ENCODE measurements at regions of chr20 and their contacts with region 1.

Region 1: GRCh38 chr20:34312544-34313217 is 9.5 kb upstream of the AHCY start:
- H3K4me3 ChIP-seq: peak overlapping the region; percentile 34
- H3K27ac ChIP-seq: no peak overlapping the region
- H3K4me1 ChIP-seq: no peaks in the 10 kb centered on the region
- CTCF ChIP-seq: peak; percentile 100

Region 2: DNA sequence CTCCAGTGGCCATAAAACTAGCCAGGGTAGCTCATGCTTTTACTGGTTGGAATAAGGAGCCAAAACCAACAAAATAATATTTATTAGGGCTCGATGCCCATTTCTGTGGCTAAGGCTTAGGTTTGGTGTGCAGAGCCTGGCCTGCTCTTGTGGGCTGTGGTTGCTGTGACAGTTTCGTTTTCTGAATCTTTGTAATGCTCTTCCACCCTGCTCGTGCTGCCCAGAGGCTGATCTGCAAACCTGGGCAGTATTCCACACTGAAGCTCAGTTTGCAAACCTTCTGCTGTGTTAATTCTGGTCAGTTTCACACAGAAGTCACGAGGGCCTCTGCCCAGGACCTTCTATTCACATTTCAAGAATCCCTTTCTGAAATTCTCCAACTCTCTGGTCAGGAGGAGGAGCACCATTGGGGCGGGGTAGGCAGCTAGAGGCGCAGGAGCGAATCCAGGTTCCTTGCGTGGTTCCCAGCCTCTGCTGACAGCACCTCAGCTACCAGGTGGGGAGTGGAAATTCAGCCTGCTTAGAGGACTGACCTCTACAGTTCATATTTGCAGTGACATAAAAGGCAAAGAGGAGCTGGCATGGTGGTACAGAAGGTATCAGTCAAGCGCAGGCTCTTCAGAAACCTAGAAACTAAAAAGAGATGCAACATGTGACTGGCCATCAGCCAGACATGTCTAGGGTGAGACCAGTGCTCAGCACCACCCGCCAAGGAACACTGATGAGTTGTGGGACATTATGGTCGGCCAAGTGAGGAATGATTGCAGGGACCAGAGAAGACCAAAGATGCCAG is 664.9 kb before region 1 on chr20:
- CTCF ChIA-PET with region 1: no interaction called
- POLR2A ChIA-PET with region 1: no interaction called
- H3K4me3 ChIP-seq: no peak overlapping the region
- H3K27ac ChIP-seq: no peak overlapping the region
- H3K4me1 ChIP-seq: no peaks in the 10 kb centered on the region
- CTCF ChIP-seq: no peak

Region 3: DNA sequence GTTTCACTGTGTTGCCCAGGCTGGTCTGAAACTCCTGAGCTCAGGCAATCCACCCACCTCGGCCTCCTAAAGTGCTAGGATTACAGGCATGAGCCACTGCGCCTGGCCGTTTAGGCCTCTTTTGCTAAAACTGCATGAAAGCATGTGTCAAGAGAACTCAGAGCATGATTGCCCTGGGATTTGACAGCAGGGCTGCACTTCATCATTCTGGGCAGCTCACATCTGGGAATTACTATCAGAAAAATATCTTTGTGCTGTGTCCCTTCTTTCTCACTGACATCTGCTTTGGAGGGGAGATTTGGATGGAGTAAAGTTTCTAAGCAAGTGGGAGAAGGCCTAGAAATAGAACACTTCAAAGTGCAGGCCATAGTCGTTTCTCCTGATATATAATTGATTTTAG is 141.0 kb before region 1 on chr20:
- CTCF ChIA-PET with region 1: no interaction called
- POLR2A ChIA-PET with region 1: no interaction called
- H3K4me3 ChIP-seq: no peak overlapping the region
- H3K27ac ChIP-seq: no peak overlapping the region
- H3K4me1 ChIP-seq: no peaks in the 10 kb centered on the region
- CTCF ChIP-seq: no peak

Region 4: DNA sequence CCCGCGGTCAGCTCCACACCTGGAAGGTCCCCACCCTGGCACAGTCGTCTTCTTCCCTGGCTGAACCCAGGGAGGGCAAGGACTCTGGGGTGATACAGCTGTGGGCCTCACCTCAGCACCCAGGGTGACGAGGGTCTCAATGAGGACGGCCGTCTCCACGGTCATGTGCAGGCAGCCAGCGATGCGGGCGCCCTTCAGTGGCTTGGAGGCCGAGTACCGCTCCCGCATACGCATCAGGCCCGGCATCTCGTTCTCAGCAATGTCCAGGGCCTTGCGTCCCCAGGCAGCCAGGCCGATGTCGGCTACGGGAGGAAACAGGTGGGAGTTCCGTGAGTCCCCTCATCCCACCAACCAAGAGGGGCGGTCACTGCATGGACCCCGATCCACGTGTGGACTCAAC is 17.4 kb before region 1 on chr20:
- CTCF ChIA-PET with region 1: interaction called, 11 read pairs
- POLR2A ChIA-PET with region 1: interaction called, 3 read pairs
- H3K4me3 ChIP-seq: no peak overlapping the region
- H3K27ac ChIP-seq: no peak overlapping the region
- H3K4me1 ChIP-seq: peaks cover under 1% of the 10 kb centered on the region
- CTCF ChIP-seq: no peak

Region 5: GRCh38 chr20:34363062-34363464 is 50.4 kb after region 1 on chr20 and contains the start of gene ITCH:
- CTCF ChIA-PET with region 1: interaction called, 15 read pairs
- POLR2A ChIA-PET with region 1: interaction called, 14 read pairs
- H3K4me3 ChIP-seq: peak within 1 kb of the TSS; percentile 88
- H3K27ac ChIP-seq: peak within 1 kb of the TSS; percentile 73
- H3K4me1 ChIP-seq: 0 out of 2 replicates have a peak, but pooled peaks cover 5% of the 10 kb centered on the region
- CTCF ChIP-seq: no peak

Region 6: DNA sequence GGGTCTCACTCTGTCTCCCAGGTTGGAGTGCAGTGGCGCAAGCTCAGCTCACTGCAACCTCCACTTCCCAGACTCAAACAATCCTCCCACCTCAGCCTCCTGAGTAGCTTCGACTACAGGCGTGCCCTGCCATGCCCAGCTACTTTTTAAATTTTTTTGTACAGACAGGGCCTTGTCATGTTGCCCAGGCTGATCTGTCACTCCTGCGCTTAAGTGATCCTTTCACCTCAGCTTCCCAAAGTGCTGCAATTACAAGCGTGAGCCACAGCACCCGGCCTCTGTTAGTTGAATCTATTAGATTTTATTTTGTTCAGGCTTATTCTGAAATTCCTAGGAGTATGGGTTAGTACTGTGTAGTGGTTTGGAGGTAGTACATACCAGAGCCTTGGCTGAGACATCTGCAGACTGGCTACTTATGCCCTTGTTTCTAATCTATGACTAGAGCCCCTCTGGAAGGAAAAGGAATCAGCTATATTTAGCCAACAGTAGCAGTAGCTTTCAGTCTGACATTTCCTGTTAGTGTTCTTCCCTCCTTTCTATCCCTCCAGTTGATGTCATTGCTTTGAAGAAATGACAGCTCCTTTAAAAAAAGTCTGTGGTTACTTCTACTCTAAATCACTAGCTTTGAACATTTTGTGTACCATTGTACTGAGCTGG is 124.8 kb after region 1 on chr20:
- CTCF ChIA-PET with region 1: interaction called, 25 read pairs
- POLR2A ChIA-PET with region 1: no interaction called
- H3K4me3 ChIP-seq: no peak overlapping the region
- H3K27ac ChIP-seq: no peak overlapping the region
- H3K4me1 ChIP-seq: no peaks in the 10 kb centered on the region
- CTCF ChIP-seq: no peak

Region 7: DNA sequence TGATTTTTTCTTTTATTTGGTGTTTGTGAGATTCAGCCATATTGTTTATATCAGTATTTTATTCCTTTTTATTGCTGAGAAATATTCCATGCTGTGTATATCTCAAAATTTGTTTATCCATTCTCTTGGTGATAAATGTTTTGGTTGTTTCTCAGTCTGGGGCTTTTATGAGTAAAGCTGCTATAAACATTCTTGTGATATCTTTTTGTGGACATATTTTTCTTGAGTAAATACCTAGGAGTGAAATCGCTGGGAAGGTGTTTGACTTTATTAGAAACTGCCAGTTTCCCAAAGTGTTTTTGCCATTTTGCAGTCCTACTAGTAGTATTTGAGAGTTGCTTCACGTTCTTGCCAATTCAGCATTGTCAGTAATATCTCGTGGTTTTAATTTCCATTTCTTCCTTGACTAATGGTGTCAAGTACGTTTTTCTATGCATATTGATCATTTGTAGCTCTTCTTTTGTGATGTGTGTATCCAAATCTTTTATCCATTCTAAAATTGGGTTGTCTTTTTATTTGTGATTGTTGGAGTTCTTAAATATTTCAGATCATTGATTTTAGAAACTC is 172.5 kb after region 1 on chr20:
- CTCF ChIA-PET with region 1: interaction called, 12 read pairs
- POLR2A ChIA-PET with region 1: no interaction called
- H3K4me3 ChIP-seq: no peak overlapping the region
- H3K27ac ChIP-seq: no peak overlapping the region
- H3K4me1 ChIP-seq: no peaks in the 10 kb centered on the region
- CTCF ChIP-seq: no peak

Region 8: GRCh38 chr20:34522969-34523871 is 210.5 kb after region 1 on chr20:
- CTCF ChIA-PET with region 1: interaction called, 116 read pairs
- POLR2A ChIA-PET with region 1: interaction called, 5 read pairs
- H3K4me3 ChIP-seq: no peak overlapping the region
- H3K27ac ChIP-seq: no peak overlapping the region
- H3K4me1 ChIP-seq: peaks cover 9% of the 10 kb centered on the region
- CTCF ChIP-seq: peak; percentile 81

Measured in HEK293 (cell line).